ENCODE measurements at regions of chr1 and their contacts with region 1.

Region 1: GRCh38 chr1:239630767-239631166 is 244.4 kb downstream of the CHRM3 start:
- ATAC-seq: peak in 1 of 8 experiments; percentile 11
- H3K4me3 ChIP-seq: no peak overlapping the region
- H3K27ac ChIP-seq: no peak overlapping the region
- H3K4me1 ChIP-seq: no peaks in the 10 kb centered on the region

Region 2: GRCh38 chr1:239696317-239696716 is 65.5 kb after region 1 on chr1:
- in situ Hi-C with region 1: loop called in 1 of 9 experiments (anchors 10 kb)
- ATAC-seq: no peak
- H3K4me3 ChIP-seq: no peak overlapping the region
- H3K27ac ChIP-seq: no peak overlapping the region
- H3K4me1 ChIP-seq: no peaks in the 10 kb centered on the region

Region 3: DNA sequence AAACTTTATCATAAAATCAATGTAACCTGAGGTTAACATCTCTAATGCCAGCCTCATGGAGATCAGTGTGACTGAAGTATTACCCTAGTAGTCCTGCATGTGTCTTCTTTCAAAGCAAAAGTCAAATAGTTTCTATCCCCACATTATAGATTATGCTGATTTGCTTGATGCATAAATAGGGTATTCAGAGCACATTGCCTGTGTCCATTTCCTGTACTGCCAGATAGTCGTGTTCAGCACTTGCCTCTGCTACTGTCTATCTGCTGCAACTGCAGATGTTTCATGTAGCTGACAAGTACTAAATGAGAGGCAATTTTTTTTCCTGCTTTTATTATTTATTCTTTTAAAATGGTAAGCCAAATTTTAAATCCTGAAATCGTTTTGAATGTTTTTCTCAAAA is 104.3 kb after region 1 on chr1:
- in situ Hi-C with region 1: loop called in 1 of 9 experiments (anchors 25 kb)
- ATAC-seq: peak in 2 of 8 experiments; percentile 55 to 57
- H3K4me3 ChIP-seq: no peak overlapping the region
- H3K27ac ChIP-seq: no peak overlapping the region
- H3K4me1 ChIP-seq: peaks cover 13 to 25% of the 10 kb centered on the region in 2 donors

Measured in motor neuron (in vitro differentiated cells).